ENCODE measurements at regions of chr14 and their contacts with region 1.

Region 1: GRCh38 chr14:52552063-52552988 is at the starts of genes GPR137C and TXNDC16:
- DNase-seq: peak; percentile 99
- H3K4me3 Mint-ChIP-seq: peak within 1 kb of the TSS; percentile 90
- H3K27ac Mint-ChIP-seq: peak within 1 kb of the TSS; percentile 77
- H3K4me1 Mint-ChIP-seq: peaks cover 24% of the 10 kb centered on the region
- H3K27me3 Mint-ChIP-seq: peaks cover 28% of the 10 kb centered on the region
- total RNA-seq, gene GPR137C: 0.07 and 0.27 TPM in 2 replicates
- total RNA-seq, gene TXNDC16: 4.7 and 5.2 TPM in 2 replicates

Region 2: DNA sequence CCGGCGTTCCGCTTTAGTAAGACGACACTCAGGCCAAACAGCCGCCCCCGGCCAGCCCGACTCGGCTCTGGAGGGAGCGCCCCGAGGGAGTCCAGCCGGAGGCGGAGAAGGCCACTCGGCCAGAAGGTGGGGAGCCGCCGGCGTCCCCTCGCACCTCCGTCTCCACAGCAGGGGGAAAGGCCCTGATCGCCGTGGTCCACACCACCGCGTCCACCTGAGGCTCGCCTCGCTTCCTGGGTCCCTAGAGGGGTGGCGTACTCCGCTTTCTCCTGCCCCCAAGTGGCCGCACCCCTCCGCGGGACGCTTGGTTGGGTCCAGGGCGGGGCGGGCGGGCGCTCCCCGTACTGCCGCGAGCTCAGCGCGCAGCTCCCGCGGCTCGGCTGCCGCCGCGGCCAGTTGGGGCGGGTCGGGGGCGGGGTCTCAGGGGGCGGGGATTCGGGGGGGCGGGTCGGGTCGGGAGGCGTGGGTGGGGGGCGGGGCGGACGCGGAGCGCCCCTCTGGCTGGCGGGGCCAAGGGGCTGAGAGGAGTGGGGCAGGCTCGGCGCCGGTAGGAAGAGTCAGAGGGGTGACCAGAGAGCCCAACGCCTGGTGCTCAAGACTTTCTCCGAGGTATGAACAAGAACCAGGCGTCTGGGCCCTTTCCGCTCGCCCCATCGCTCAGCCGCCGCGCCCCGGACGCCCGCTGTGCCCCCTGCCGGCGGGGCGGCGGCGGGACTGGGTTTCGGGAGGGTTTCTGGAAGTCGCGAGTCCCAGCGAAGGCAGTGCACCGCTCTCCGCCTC is 900.7 kb before region 1 on chr14 and contains the start of gene FRMD6:
- intact Hi-C with region 1: loop called (anchors 2 kb)
- DNase-seq: peak; percentile 78
- H3K4me3 Mint-ChIP-seq: peak within 1 kb of the TSS; percentile 84
- H3K27ac Mint-ChIP-seq: peak within 1 kb of the TSS; percentile 69
- H3K4me1 Mint-ChIP-seq: peaks cover 23% of the 10 kb centered on the region
- H3K27me3 Mint-ChIP-seq: peaks cover 11% of the 10 kb centered on the region
- total RNA-seq, gene FRMD6: 11.6 and 17.8 TPM in 2 replicates

Region 3: GRCh38 chr14:52402812-52403526 is 149.4 kb before region 1 on chr14:
- intact Hi-C with region 1: loop called (anchors 5 kb)
- DNase-seq: no peak
- H3K4me3 Mint-ChIP-seq: no peak overlapping the region
- H3K27ac Mint-ChIP-seq: peak overlapping the region; percentile 47
- H3K4me1 Mint-ChIP-seq: peaks cover 69% of the 10 kb centered on the region
- H3K27me3 Mint-ChIP-seq: no peaks in the 10 kb centered on the region

Region 4: DNA sequence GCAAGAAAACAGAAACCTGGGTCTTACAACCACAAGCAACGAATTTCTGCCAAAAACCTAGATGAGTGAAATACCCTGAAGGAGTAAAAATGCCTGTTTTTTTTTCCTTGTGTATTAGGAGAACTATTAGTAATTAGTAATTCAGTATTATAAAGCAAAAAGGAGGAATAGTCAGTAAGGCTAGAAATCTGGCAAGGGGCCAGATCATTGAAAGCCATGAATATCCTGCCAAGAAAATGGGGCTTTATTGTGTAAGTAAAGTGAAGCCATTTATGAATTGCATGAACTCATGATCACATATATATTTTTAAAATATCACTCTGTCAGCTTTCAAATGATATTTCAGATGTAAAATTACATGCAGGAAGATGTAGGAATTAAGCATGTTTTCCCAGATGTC is 57.9 kb before region 1 on chr14:
- intact Hi-C with region 1: no loop called
- DNase-seq: no peak
- H3K4me3 Mint-ChIP-seq: no peak overlapping the region
- H3K27ac Mint-ChIP-seq: no peak overlapping the region
- H3K4me1 Mint-ChIP-seq: no peaks in the 10 kb centered on the region
- H3K27me3 Mint-ChIP-seq: no peaks in the 10 kb centered on the region

Region 5: DNA sequence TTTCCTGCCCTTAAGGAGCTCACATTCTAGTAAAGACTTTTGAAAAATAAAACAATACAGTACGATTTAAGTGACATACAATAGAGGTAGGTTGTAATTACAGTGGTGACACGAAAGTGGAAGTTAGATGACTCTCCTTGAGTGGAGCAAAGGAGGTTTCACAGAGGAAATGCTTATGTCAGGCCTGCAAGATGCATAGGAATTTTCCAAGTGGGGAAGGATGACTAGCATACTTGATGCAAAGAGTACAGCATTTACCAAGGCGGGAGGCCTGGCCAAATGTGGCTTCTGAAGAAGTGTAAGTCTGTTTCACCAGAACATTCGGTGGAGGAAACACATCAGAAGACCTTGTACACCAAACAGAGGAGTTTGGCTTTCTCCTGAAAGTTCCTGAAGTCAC is 87.8 kb after region 1 on chr14:
- intact Hi-C with region 1: loop called (anchors 10 kb)
- DNase-seq: no peak
- H3K4me3 Mint-ChIP-seq: no peak overlapping the region
- H3K27ac Mint-ChIP-seq: peak overlapping the region; percentile 66
- H3K4me1 Mint-ChIP-seq: peaks cover 11% of the 10 kb centered on the region
- H3K27me3 Mint-ChIP-seq: peaks cover under 1% of the 10 kb centered on the region

Region 6: DNA sequence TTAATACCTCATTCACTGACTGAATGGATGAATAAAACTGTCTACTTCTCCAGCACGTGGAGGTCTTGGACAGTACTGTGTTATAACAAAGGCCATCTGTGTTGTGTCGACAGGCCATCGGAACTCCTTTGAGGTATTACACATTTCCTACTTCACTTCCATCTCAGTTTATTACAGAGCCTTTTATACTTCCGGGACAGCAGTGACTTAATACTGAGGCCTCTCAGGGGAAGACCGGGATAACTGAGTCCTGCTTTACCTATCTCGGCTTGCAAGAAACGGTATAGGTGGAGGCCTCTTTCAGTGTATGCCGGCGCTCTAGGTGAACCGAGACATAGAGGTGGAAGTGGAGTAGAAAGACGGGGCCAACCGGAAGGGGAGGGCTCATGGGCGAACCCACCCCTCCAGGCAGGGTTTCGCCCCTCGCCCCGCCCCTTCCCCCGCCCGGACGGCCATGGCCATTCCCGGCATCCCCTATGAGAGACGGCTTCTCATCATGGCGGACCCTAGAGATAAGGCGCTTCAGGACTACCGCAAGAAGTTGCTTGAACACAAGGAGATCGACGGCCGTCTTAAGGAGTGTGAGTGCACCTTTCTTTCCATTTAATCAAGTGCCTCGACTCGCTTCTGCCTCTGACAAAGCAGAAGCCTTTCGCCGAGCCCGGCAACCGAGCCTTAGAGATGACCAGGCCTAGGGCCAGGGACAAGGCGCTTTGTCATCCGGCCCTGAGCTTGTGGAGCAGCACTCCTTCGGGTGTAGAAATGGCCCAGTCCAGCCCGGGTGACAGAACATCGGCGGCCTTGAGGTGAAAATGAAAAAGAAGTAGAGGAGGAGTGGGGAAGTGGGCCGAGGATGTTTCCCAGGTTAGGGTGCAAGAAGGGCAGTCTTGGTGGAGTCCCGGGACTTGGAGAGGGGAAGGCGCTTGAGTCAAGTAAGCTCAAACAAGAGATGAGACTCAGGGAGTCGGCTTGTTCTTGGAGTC is 154.7 kb after region 1 on chr14 and contains the start of gene PSMC6:
- intact Hi-C with region 1: loop called (anchors 1 kb)
- DNase-seq: peak; percentile 84
- H3K4me3 Mint-ChIP-seq: peak within 1 kb of the TSS; percentile 99
- H3K27ac Mint-ChIP-seq: peak within 1 kb of the TSS; percentile 93
- H3K4me1 Mint-ChIP-seq: peaks cover 39% of the 10 kb centered on the region
- H3K27me3 Mint-ChIP-seq: no peaks in the 10 kb centered on the region
- total RNA-seq, gene PSMC6: 144 and 155 TPM in 2 replicates

Region 7: DNA sequence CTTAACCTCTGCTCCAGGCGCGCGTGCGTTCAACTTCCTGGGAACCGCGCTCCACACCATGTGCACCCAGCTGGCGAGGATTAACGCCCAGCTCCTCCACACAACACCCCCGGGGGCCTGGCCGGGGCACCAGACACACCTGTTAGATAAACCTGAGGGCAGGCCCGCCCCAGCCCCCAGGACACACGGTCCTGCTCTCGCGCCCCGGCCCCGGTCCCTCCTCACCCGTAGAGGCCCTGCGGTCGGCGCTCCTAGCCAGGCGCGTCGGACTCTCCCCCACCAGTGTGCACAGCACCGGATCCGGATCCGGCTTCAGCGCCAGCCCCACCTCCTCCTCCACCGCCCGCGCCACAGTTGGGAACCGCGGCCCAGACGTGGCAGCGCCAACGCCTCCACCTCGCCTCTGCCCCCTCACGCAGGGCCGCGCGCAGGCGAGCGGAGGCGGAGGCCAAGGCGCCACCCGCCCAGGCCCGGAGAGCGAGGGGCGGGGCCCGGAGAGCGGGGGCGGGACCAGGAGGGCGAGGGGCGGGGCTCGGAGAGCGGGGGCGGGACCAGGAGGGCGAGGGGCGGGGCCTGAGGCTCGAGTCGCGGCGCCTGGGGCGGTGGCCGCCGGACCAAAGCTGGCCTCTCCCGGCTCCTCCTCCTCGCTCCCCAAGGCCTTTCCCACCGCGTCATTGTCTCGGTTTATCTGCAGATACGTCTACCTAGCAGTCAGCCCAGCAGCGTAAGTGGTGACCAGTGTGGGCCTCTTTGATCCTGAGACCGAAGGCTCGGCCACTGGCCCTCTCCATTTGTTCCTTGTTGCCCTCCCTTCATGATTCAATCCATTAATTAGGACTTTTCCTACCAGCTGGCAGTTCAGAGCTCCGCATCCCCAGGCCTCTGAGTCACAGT is 239.1 kb after region 1 on chr14 and contains the start of gene GNPNAT1:
- intact Hi-C with region 1: loop called (anchors 5 kb)
- DNase-seq: peak; percentile 85
- H3K4me3 Mint-ChIP-seq: peak within 1 kb of the TSS; percentile 89
- H3K27ac Mint-ChIP-seq: peak within 1 kb of the TSS; percentile 73
- H3K4me1 Mint-ChIP-seq: peaks cover 27% of the 10 kb centered on the region
- H3K27me3 Mint-ChIP-seq: no peaks in the 10 kb centered on the region
- total RNA-seq, gene GNPNAT1: 29.4 and 34.8 TPM in 2 replicates

Measured in activated T-helper 2 cell treated with anti-CD3 and anti-CD28 coated beads, Interferon-gamma antibody, Interleukin-2, Interleukin-4, amounts not matched to agents 10 μg/mL and 5 μg/mL and 100 μg/mL, durations not matched to agents 14 hours and 24 hours and 36 hours (primary cell).